ENCODE measurements at regions of chr4 and their contacts with region 1.

Region 1: GRCh38 chr4:87961993-87962392 is 13.5 kb upstream of the SPP1 start:
- DNase-seq: no peak
- H3K4me3 ChIP-seq: no peak overlapping the region
- H3K27ac ChIP-seq: no peak overlapping the region
- H3K4me1 ChIP-seq: no peaks in the 10 kb centered on the region
- H3K27me3 ChIP-seq: no peaks in the 10 kb centered on the region
- CTCF ChIP-seq: no peak
- POLR2A ChIP-seq: no peak

Region 2: DNA sequence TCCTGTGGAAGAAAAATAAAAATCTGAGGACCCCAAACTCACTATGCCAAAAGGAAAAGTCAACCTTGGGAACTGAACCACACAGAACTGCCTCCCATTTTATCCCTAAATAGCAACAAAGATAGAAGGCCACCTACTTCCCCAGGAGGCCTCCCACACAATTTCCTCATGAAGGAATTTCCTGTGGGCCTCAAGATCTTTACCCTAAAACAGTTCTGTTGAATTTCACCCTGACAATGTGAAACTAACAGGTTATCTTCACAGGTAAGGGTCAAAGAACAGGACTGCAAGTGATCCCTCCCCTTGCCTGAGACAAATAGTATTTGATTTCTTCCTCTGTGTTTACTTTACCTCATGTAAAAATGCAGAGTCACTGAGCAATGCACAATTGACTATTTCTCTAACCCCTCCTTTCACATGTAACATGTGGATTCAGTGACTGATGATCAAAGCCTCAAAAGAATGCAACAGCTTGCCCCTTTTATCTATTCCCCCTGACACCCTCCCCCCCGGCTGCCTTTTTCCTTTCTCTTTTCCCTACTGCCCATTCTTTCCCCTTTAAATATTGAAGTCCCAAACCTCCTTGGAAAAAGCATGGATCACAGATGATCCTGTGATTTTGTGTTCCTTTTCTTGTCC is 95.9 kb before region 1 on chr4:
- intact Hi-C with region 1: loop called (anchors 10 kb)
- DNase-seq: no peak
- H3K4me3 ChIP-seq: no peak overlapping the region
- H3K27ac ChIP-seq: no peak overlapping the region
- H3K4me1 ChIP-seq: no peaks in the 10 kb centered on the region
- H3K27me3 ChIP-seq: no peaks in the 10 kb centered on the region
- CTCF ChIP-seq: no peak
- POLR2A ChIP-seq: no peak

Measured in vagina (tissue), 2 donors.